AG04450 (cell line): ENCODE measurements at regions of chr1 and their contacts with region 1.

Region 1: GRCh38 chr1:153727463-153728304 is at the start of gene INTS3:
- DNase-seq: peak; percentile 100
- H3K4me3 ChIP-seq: peak within 1 kb of the TSS; percentile 93
- H3K27ac ChIP-seq: peak within 1 kb of the TSS; percentile 94
- H3K27me3 ChIP-seq: no peaks in the 10 kb centered on the region
- CTCF ChIP-seq: no peak; the same call in 1 of the 2 replicates
- polyA plus RNA-seq, gene INTS3: 44.5 and 45.1 TPM in 2 replicates

Region 2: DNA sequence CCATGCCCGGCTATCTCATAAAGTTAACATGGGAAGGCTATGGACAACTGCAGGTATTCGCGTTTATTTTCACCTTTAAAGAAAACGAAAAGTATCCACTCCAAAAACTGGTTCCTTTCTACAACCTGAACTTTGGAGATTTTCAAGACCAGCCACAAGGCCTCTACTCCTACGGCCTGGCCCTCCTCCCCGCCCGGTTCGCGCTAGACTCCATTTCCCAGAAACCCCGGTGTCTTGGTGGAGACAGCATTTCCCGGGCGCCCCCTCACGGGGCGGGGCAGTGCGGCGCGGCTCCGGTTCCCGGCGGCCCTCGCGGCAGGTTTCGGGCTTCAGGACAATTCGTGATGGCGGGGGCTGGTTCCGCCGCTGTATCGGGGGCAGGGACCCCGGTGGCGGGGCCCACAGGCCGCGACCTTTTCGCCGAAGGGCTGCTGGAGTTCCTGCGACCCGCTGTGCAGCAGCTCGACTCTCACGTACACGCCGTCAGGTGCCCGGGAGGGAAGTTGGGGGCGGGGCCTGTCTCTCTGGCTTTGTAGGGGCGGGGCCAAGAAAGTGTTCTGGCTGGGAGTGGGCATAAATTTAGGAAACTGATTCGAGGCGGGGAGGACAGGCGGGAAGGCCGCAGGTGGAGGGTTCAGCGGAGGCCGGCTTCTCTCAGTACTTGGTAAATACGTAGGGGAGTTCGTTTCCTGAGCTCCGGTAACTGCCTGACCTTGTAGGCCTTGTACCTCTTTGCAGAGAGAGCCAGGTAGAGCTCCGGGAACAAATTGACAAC is 69.1 kb before region 1 on chr1 and contains the start of gene SNAPIN:
- CTCF ChIA-PET with region 1: no interaction called
- POLR2A ChIA-PET with region 1: interaction called, 14 read pairs
- DNase-seq: peak; percentile 49
- H3K4me3 ChIP-seq: peak within 1 kb of the TSS; percentile 92
- H3K27ac ChIP-seq: no peak within 1 kb of the TSS
- H3K27me3 ChIP-seq: no peaks in the 10 kb centered on the region
- CTCF ChIP-seq: no peak; the same call in 1 of the 2 replicates
- polyA plus RNA-seq, gene SNAPIN: 54.1 and 56.8 TPM in 2 replicates